IMR-90 (cell line): ENCODE measurements at regions of chr11 and their contacts with region 1.

Region 1: GRCh38 chr11:75706260-75706729 is 11.3 kb upstream of the MOGAT2 start:
- DNase-seq: peak; percentile 64
- ATAC-seq: peak; percentile 98
- H3K4me3 ChIP-seq: no peak overlapping the region
- H3K27ac ChIP-seq: no peak overlapping the region
- H3K4me1 ChIP-seq: no peaks in the 10 kb centered on the region
- H3K27me3 ChIP-seq: peaks cover 9% of the 10 kb centered on the region
- CTCF ChIP-seq: peak; percentile 75
- POLR2A ChIP-seq: no peak
- RAD21 ChIP-seq: peak; percentile 55

Region 2: DNA sequence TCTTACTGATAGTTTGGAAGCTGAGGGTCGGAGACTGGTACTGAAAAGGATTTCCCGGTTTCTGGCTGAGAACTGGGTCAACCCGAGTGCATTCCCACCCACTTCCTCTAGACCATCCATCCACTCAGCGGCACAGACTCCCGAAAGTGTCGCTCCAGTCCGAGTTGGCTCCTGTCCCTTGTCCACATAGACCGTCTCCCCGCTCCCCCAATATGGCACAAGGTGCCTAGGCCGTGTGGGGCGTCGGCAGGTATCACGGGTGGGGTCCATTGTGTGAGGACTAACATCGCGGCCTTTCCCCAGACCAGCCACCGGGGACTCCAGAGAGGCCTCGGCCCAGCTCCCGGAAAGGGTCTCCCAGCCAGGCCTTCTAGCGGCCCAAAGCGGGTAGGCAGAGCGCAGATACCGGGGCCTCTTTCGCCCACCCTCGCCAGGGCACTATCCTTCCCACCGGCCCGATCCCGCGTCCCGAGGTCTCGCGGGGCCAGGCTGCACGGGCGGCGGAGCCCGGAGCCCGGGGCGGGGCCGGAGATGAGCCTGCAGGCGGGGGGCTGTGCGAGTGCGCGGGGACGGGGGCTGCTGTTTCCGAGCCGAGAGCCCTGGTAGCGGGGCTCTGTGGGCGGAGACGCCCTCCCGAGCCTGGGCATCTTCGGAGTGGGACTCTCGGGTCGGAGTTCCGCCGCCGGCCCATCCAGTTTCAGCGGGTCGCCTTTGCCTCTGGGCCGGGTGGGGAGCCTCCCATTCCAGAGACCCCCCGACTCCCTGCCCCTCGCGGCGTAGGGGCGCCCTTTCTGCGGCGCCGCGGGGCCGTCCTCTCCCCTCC is 123.2 kb before region 1 on chr11:
- CTCF ChIA-PET with region 1: no interaction called
- POLR2A ChIA-PET with region 1: no interaction called
- dilution Hi-C with region 1: no loop called
- in situ Hi-C with region 1: no loop called
- intact Hi-C with region 1: loop called (anchors 5 kb)
- DNase-seq: peak; percentile 66
- ATAC-seq: peak; percentile 94
- H3K4me3 ChIP-seq: peak overlapping the region; percentile 65
- H3K27ac ChIP-seq: peak overlapping the region; percentile 95
- H3K4me1 ChIP-seq: peaks cover 8% of the 10 kb centered on the region
- H3K27me3 ChIP-seq: no peaks in the 10 kb centered on the region
- CTCF ChIP-seq: 0 out of 2 replicates have a peak, but pooled peaks have one; percentile 9
- POLR2A ChIP-seq: 0 out of 2 replicates have a peak, but pooled peaks have one; percentile 53
- RAD21 ChIP-seq: no peak